Gastrocnemius medialis (tissue), 4 donors: ENCODE measurements at regions of chr3 and their contacts with region 1.

Region 1: DNA sequence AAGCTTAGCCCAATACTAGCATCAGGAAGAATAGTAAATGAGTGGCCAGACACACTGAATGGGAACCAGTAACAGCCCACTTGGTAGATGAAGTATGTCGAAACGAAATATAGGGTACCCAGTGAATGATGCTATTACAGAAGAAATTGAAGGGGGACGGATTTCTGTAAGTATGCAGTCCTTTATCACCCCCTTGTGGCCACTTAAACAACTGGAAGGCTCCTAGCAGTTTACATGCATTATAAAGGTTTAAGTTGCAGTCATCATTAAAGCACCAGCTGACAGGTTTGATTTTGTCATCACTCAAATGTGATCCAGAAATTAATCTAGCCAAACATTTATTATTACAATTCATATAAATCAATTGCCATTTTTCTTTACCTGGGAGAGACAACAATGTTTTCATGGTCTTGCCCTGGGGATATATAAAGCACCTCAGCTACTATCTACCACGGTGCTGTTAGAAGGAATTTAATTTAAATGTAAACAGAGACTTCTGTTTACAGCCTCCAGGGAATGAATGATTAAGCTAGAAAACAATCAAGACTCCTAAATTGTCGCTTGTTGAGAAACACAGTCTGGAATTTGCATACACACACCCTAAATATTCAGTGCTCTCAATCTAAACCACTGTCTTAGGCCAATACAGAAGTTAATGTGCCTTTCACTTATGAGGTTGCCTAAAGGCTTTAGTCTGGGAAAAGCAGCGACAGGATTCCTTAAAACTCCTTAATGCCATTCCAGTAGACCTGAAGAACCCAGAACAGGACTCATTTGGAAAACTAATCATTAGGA is 7.8 kb downstream of the EIF1B start:
- DNase-seq: no peak
- ATAC-seq: peak; percentile 37 to 49
- H3K4me3 ChIP-seq: no peak overlapping the region
- H3K27ac ChIP-seq: no peak overlapping the region
- H3K4me1 ChIP-seq: peaks cover 21 to 23% of the 10 kb centered on the region in 2 donors
- H3K27me3 ChIP-seq: no peaks in the 10 kb centered on the region
- CTCF ChIP-seq: peak; percentile 68 to 82 (median 75)
- POLR2A ChIP-seq: no peak

Region 2: DNA sequence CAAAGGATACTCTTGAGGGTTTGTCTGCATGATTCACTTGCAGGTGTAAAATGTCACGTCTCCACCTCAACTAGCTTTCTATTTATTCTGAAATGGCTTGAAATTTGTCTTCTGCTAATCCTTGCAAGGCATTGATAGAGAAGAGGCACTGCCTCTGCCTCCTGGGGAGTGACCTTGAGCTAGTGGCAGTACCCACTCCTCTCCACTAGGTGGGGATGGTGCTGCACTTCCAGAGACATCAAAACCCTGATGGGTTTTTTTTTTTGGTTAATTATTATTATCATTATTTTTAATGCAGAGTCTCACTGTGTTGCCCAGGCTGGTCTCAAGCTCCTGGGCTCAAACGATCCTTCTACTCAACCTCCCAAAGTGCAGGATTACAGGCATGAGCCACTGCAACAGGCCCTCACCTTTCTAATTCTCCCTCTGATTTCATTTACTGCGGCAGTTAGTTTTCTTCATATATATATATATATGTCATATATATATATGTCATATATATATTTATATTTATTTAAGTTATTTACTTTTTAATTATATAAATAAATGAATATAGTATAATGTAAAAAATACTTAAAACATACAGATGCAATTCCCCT is 125.3 kb before region 1 on chr3:
- in situ Hi-C with region 1: loop called (anchors 5 kb)
- intact Hi-C with region 1: loop called (anchors 1 kb)
- DNase-seq: no peak
- ATAC-seq: peak; percentile 34 to 70
- H3K4me3 ChIP-seq: no peak overlapping the region
- H3K27ac ChIP-seq: no peak overlapping the region
- H3K4me1 ChIP-seq: peaks cover 3 to 4% of the 10 kb centered on the region in 2 donors
- H3K27me3 ChIP-seq: no peaks in the 10 kb centered on the region
- CTCF ChIP-seq: peak; percentile 71 to 91 (median 76)
- POLR2A ChIP-seq: no peak

Region 3: DNA sequence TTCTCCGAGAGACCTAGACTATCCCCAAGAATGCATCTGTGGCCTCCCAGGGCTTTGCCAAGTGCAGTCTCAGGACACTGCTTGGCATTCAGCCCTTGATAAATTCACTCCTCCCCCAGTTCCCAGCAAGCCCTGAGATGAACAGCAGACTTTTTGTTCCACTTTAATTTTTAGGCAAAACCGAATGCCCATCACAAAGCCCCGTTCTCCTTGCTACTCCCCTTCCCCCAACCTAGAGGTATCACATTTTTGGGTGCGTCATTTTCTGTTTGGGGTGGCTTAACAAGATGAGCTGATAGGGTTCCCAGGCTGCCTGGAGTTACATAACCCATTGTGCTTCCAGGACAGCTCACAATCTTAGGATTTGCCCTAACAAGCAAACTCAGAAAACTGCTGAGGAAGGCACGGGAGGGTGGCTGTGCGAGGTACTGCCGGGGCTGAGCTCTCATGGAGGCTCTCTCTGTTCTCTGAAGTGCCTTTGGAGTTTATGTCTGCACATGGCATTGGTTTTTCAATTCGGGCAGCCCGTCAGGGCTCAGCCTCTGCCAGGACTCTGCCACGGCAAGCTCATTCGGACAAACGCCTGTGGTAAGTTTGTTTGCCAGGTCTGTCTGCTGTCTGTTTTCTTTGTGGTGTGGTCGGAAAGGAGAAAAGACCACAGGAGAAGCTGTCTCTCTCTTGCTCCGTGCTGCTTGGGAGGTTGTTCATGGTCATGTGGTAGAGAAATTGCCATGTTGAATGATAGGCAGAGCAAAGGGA is 1773.9 kb after region 1 on chr3 and contains the start of gene TRAK1:
- in situ Hi-C with region 1: no loop called
- intact Hi-C with region 1: loop called (anchors 10 kb)
- DNase-seq: peak; percentile 39 to 53
- ATAC-seq: peak; percentile 76 to 77
- H3K4me3 ChIP-seq: peak within 1 kb of the TSS; percentile 33 to 43 (median 38)
- H3K27ac ChIP-seq: peak within 1 kb of the TSS; percentile 80 to 86 (median 84)
- H3K4me1 ChIP-seq: peaks cover 29 to 37% of the 10 kb centered on the region in 2 donors
- H3K27me3 ChIP-seq: no peaks in the 10 kb centered on the region
- CTCF ChIP-seq: no peak
- POLR2A ChIP-seq: no peak
- total RNA-seq, gene TRAK1: 59.5 to 109 (median 98.6) TPM